Colonic mucosa (tissue), 4 donors: ENCODE measurements at regions of chr1 and their contacts with region 1.

Region 1: GRCh38 chr1:25608488-25609178 is 8.0 kb upstream of the MAN1C1 start:
- DNase-seq: peak; percentile 91
- H3K4me3 ChIP-seq: no peak overlapping the region
- H3K27ac ChIP-seq: no peak overlapping the region
- H3K4me1 ChIP-seq: no peaks in the 10 kb centered on the region
- H3K27me3 ChIP-seq: no peaks in the 10 kb centered on the region
- CTCF ChIP-seq: peak; percentile 66

Region 2: DNA sequence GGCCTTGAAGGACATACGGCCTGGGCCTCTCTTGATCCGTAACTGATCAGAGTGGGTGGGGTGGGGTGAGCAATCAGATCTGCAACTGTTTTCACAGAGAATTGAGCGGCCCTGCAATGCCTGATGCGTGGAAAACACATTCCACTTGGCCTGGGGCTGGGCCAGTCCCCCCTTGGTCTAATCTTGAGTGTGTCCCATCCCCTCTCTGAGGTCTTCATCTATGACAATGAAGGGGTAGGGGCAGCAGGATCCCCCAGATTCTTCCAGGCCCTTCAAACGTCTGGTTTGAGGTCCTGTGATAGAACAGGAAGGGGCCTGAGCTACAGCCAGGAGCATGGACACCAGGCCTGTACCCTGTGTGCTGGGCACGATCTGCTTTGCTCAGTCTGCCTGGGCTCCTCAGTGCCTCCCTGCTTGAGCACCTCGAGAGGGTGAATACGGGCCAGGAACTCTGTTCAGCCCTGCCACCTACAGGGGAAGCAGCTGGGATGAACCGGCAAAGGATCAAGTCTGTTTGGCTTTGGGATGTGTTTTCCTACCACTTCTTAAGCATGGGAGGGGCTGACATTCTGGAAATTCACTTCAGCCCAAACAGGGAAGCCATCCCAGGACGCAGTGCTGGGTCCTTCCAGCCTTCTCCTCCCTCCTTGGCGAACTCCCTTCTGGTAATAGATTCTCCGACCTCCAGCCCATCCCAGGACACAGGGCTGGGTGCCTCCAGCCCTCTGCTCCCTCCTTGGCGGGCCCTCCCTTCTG is 135.4 kb after region 1 on chr1:
- intact Hi-C with region 1: loop called (anchors 5 kb)
- DNase-seq: peak; percentile 65
- H3K4me3 ChIP-seq: no peak overlapping the region
- H3K27ac ChIP-seq: peak overlapping the region; percentile 46
- H3K4me1 ChIP-seq: no peaks in the 10 kb centered on the region
- H3K27me3 ChIP-seq: no peaks in the 10 kb centered on the region
- CTCF ChIP-seq: peak; percentile 27

Region 3: DNA sequence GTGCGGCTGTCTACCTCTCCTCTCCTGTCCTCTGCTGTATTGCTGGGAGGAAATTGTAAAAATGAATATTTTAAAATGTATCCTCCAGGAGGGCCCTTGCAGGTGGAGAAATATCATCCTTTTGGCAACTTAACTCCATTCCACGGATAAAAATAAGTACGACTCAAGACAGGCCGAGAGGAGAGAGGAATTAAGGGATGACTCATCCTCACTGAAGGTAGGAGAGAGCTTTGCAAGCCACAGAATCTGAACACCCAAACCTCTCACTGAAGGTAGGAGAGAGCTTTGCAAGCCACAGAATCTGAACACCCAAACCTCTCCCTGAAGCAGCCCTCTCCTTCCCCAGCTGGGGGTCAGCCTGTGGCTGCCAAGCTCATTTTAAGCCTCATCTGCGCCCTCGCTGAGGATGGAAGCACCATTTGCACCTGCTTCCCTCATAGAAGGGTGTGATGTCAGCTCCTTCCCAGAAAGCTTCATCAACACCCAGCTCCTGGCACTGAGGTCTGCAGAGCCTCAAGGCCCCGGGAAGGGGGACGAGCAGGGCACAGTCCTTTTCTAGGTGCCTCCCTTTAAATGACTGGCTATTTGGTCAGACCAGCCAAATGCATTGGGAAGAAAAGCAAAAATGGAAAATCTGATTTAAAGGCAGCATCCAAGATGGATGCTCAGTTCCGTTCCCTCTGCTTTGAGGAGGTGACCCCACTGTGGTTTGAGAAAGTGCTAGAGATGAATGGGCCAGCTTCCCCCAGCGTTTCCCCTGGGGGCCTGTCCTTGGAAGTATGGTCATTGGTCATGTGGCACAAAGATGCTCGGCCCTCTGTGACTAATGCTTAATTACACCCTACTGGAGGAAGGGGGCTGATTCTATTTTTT is 178.5 kb after region 1 on chr1:
- intact Hi-C with region 1: no loop called
- DNase-seq: no peak
- H3K4me3 ChIP-seq: no peak overlapping the region
- H3K27ac ChIP-seq: no peak overlapping the region
- H3K4me1 ChIP-seq: no peaks in the 10 kb centered on the region
- H3K27me3 ChIP-seq: no peaks in the 10 kb centered on the region
- CTCF ChIP-seq: no peak

Region 4: GRCh38 chr1:25810341-25811299 is 202.0 kb after region 1 on chr1:
- intact Hi-C with region 1: loop called (anchors 5 kb)
- DNase-seq: peak; percentile 77
- H3K4me3 ChIP-seq: no peak overlapping the region
- H3K27ac ChIP-seq: no peak overlapping the region
- H3K4me1 ChIP-seq: no peaks in the 10 kb centered on the region
- H3K27me3 ChIP-seq: no peaks in the 10 kb centered on the region
- CTCF ChIP-seq: peak; percentile 90

Region 5: DNA sequence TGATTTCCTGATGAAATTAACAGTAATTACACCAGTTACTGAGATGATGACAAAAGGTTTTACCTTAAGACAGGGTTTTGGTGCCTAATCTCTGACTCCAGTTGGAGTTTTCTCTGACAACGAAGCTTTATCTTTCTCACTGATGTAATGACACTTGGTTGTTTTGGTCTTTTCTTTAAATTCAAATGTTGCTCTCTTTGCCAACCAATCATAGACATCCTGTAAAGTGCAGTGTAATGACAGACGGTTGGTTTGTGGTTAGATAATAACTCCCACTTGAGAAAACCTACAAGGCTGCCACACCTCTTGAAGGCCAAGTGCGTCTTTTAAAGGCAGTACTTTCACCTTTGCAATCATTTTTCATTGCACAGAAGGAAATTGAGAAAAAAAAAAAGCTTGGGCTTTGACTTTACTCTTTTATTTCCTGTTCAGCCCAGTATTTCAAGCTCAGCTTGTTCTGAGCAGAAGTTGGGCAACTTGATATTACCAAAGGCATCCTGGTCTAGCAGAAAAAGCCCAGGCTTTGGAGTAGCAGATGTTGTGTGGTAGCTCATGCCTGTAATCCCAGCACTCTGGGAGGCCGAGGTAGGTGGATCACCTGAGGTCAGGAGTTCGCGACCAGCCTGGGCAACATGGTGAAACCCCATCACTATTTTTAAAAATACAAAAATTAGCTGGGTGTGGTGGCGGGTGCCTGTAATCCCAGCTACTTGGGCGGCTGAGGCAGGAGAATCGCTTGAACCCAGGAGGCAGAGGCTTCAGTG is 517.9 kb after region 1 on chr1:
- intact Hi-C with region 1: no loop called
- DNase-seq: peak; percentile 73
- H3K4me3 ChIP-seq: peak overlapping the region; percentile 38
- H3K27ac ChIP-seq: peak overlapping the region; percentile 97
- H3K4me1 ChIP-seq: no peaks in the 10 kb centered on the region
- H3K27me3 ChIP-seq: no peaks in the 10 kb centered on the region
- CTCF ChIP-seq: no peak